Endothelial cell of umbilical vein (primary cell): ENCODE measurements at regions of chr13 and their contacts with region 1.

Region 1: DNA sequence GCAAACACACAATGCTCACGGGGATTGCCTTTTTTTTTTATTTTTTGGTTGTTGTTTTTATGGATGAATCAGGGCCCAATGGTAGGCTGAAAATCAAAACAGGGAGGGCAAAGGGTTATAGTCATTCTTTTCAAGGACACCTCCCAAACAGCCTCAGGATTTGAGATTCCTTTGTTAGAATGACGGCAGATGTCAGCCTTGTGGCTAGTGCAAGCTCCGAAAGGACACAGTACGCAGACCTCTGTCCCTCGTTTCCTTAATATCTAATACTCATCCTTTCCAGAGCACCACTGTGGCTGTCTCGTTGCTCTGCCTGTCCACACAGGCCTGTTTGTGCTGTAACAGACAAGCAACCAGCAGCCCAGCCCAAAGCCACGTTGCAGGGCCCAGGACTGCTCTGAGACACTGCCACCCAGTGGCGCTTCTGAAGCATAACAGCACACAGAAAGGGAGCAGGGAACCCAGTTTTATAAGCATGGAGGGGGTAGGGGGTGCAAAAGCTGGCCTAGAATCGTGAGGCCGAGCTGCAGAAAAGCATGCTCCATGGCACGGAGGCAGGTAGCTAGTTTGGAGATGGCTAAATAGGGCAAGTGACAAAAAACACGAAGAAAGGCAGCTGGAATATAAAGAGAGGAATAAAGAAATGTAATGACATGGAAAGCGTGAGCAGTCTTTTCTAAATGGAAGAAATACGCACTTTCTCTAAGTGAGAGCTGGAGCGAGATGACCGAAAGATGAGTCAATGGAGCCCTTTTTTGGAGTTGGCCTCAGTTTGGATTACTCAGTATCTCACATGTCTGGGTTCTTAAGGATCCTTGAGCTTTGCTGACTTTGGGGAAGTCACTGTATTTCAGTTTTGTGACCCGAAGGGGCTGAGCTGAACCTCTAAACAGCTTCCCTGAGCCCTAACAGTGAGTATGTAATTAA is 40.7 kb upstream of the MEDAG start:
- DNase-seq: peak; percentile 92
- H3K4me3 ChIP-seq: no peak overlapping the region
- H3K27ac ChIP-seq: peak overlapping the region; percentile 95
- H3K4me1 ChIP-seq: peaks cover 29% of the 10 kb centered on the region
- H3K27me3 ChIP-seq: no peaks in the 10 kb centered on the region
- CTCF ChIP-seq: peak; percentile 91 to 96
- POLR2A ChIP-seq: no peak

Region 2: DNA sequence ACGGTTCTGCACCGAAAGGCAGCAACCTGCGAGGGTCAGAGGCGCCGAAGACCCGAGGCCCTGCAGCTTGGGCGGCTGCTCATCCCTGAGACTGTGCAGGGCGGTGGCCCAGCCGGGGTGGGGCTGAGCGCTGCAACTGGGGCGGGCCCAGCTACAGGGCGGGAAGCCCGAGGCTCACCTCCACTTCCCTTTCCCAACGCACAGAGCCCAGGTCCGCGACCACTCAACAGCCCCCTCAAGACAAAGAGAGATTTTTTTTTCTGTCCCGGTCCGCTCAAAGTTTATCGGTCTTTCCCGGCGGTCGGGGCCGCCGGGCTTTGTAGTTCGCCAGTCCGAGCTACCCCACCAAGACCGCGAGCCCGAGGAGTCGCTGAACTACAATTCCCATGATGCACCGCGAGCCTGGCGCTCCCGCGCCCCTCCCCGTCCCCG is 558.6 kb before region 1 on chr13:
- CTCF ChIA-PET with region 1: no interaction called
- POLR2A ChIA-PET with region 1: interaction called, 3 read pairs
- dilution Hi-C with region 1: no loop called
- intact Hi-C with region 1: loop called (anchors 10 kb)
- DNase-seq: peak; percentile 90
- H3K4me3 ChIP-seq: peak overlapping the region; percentile 36 to 88 (median 77)
- H3K27ac ChIP-seq: peak overlapping the region; percentile 86
- H3K4me1 ChIP-seq: peaks cover 24% of the 10 kb centered on the region
- H3K27me3 ChIP-seq: no peaks in the 10 kb centered on the region
- CTCF ChIP-seq: no peak
- POLR2A ChIP-seq: peak; percentile 50

Region 3: DNA sequence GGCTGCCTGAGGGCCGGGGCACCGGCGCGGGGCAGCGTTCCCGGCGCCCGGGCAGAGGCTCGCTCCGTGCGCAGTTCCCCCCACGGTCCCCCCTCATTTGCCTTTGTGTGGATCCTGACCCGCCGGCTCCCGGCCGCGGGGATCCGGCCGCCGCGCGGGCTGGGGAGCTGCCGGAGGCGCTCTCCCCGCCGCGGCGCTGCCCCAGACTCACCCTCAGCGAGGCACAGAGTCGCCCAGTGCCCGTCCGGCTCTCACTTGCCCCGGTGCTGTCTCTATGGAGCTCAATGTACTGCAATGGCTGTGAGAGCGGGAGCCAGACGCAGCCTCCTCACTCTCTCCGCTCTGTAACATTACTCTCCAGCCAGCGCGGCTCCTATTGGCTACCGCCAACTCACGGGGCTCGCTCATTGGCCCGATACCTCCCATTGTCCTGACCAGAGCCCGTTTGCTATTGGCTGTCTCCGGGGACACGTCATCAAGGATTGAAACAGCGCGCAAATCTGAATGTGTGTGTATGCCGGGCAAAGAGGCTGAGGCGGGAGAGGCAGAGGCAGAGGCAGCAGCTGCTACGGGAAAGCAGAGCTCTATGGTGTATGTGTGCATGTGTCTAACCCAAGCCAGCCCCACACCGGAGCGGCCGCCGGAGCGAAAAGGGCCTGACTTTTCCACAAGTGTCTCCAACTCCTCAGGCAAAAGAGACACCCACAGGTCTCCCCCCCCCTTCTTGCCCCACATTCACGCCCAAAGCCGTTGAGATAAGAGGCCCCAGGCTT is 399.6 kb before region 1 on chr13 and contains the start of gene HMGB1:
- CTCF ChIA-PET with region 1: interaction called, 4 read pairs
- POLR2A ChIA-PET with region 1: no interaction called
- dilution Hi-C with region 1: no loop called
- intact Hi-C with region 1: loop called (anchors 1 kb)
- DNase-seq: peak; percentile 98
- H3K4me3 ChIP-seq: peak within 1 kb of the TSS; percentile 48 to 69 (median 66)
- H3K27ac ChIP-seq: peak within 1 kb of the TSS; percentile 85
- H3K4me1 ChIP-seq: peaks cover 25% of the 10 kb centered on the region
- H3K27me3 ChIP-seq: no peaks in the 10 kb centered on the region
- CTCF ChIP-seq: no peak
- POLR2A ChIP-seq: peak; percentile 80
- total RNA-seq, gene HMGB1: 670 and 675 TPM in 2 replicates

Region 4: GRCh38 chr13:30739761-30740642 is 125.4 kb before region 1 on chr13:
- CTCF ChIA-PET with region 1: interaction called, 6 read pairs
- POLR2A ChIA-PET with region 1: no interaction called
- dilution Hi-C with region 1: no loop called
- intact Hi-C with region 1: loop called (anchors 2 kb)
- DNase-seq: peak; percentile 64
- H3K4me3 ChIP-seq: no peak overlapping the region
- H3K27ac ChIP-seq: peak overlapping the region; percentile 66
- H3K4me1 ChIP-seq: peaks cover 50% of the 10 kb centered on the region
- H3K27me3 ChIP-seq: no peaks in the 10 kb centered on the region
- CTCF ChIP-seq: no peak
- POLR2A ChIP-seq: no peak

Region 5: DNA sequence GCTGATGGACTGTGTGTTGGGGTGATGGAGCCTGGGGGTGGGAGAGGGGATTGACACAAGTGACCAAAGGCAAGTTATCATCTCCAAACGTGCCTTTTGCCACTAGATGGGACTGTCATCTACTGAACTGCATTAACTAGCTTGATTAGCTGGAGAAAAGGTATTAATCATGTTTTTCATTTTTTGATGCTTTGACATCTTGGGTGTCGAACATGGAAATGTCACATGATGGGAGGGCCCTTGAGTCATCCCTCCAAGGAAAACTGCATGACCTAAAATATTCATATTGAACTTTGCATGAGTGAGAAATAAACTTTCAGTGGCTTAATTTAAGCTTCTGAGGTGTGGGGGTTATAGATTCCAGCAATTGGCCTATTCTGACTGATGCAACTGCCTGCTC is 56.8 kb before region 1 on chr13:
- CTCF ChIA-PET with region 1: interaction called, 32 read pairs
- POLR2A ChIA-PET with region 1: interaction called, 4 read pairs
- dilution Hi-C with region 1: loop called (anchors 10 kb)
- intact Hi-C with region 1: loop called (anchors 1 kb)
- DNase-seq: no peak
- H3K4me3 ChIP-seq: no peak overlapping the region
- H3K27ac ChIP-seq: no peak overlapping the region
- H3K4me1 ChIP-seq: peaks cover 13% of the 10 kb centered on the region
- H3K27me3 ChIP-seq: no peaks in the 10 kb centered on the region
- CTCF ChIP-seq: no peak
- POLR2A ChIP-seq: no peak

Region 6: GRCh38 chr13:30898678-30899241 is 33.4 kb after region 1 on chr13:
- CTCF ChIA-PET with region 1: interaction called, 7 read pairs
- POLR2A ChIA-PET with region 1: interaction called, 3 read pairs
- dilution Hi-C with region 1: no loop called
- intact Hi-C with region 1: loop called (anchors 1 kb)
- DNase-seq: peak; percentile 99
- H3K4me3 ChIP-seq: peak overlapping the region in 1 of 3 experiments; percentile 20
- H3K27ac ChIP-seq: peak overlapping the region; percentile 90
- H3K4me1 ChIP-seq: peaks cover 40% of the 10 kb centered on the region
- H3K27me3 ChIP-seq: no peaks in the 10 kb centered on the region
- CTCF ChIP-seq: no peak
- POLR2A ChIP-seq: no peak

Region 7: GRCh38 chr13:31044377-31045285 is 179.2 kb after region 1 on chr13:
- CTCF ChIA-PET with region 1: interaction called, 18 read pairs
- POLR2A ChIA-PET with region 1: no interaction called
- dilution Hi-C with region 1: no loop called
- intact Hi-C with region 1: loop called (anchors 1 kb)
- DNase-seq: peak; percentile 83
- H3K4me3 ChIP-seq: no peak overlapping the region
- H3K27ac ChIP-seq: peak overlapping the region; percentile 68
- H3K4me1 ChIP-seq: peaks cover 35% of the 10 kb centered on the region
- H3K27me3 ChIP-seq: no peaks in the 10 kb centered on the region
- CTCF ChIP-seq: peak; percentile 92 to 93
- POLR2A ChIP-seq: no peak